ENCODE measurements at regions of chr1 and their contacts with region 1.

Region 1: GRCh38 chr1:89125913-89126580 is at the start of gene GBP2:
- DNase-seq: peak; percentile 51
- H3K4me3 Mint-ChIP-seq: peak within 1 kb of the TSS; percentile 95
- H3K27ac Mint-ChIP-seq: peak within 1 kb of the TSS; percentile 99
- H3K4me1 Mint-ChIP-seq: peaks cover 54% of the 10 kb centered on the region
- H3K27me3 Mint-ChIP-seq: no peaks in the 10 kb centered on the region
- total RNA-seq, gene GBP2: 396 to 403 TPM

Region 2: GRCh38 chr1:88990426-88990825 is 135.6 kb before region 1 on chr1:
- CTCF ChIA-PET with region 1: no interaction called
- POLR2A ChIA-PET with region 1: interaction called, 4 read pairs
- intact Hi-C with region 1: loop called (anchors 1 kb)
- DNase-seq: no peak
- H3K4me3 Mint-ChIP-seq: peak overlapping the region; percentile 35
- H3K27ac Mint-ChIP-seq: peak overlapping the region; percentile 70
- H3K4me1 Mint-ChIP-seq: peaks cover 47% of the 10 kb centered on the region
- H3K27me3 Mint-ChIP-seq: no peaks in the 10 kb centered on the region

Region 3: GRCh38 chr1:89065079-89065868 is 60.8 kb before region 1 on chr1 and contains the start of gene GBP1:
- CTCF ChIA-PET with region 1: interaction called, 3 read pairs
- POLR2A ChIA-PET with region 1: interaction called, 7 read pairs
- intact Hi-C with region 1: loop called (anchors 1 kb)
- DNase-seq: no peak
- H3K4me3 Mint-ChIP-seq: peak within 1 kb of the TSS; percentile 87
- H3K27ac Mint-ChIP-seq: peak within 1 kb of the TSS; percentile 91
- H3K4me1 Mint-ChIP-seq: peaks cover 56% of the 10 kb centered on the region
- H3K27me3 Mint-ChIP-seq: no peaks in the 10 kb centered on the region
- total RNA-seq, gene GBP1: 66.9 to 67.9 TPM

Region 4: DNA sequence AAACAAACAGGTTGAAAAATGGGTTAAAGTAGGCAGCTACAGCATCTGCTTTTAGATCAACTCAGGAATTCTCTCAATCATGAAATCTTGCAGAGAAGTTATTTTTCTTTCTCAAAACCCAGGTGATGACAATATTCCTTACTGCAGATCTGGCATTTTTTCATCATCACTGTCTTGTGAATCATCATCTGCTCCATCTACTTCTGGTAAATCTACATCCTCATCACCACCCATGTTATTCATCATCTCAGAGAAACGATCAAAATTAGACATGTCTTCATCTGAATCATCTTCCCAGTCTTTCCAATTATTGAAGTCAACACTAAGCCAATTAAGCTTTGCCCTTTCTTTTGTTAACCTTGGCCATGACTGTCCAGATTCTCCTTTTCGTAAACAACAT is 21.9 kb before region 1 on chr1:
- CTCF ChIA-PET with region 1: no interaction called
- POLR2A ChIA-PET with region 1: interaction called, 4 read pairs
- intact Hi-C with region 1: loop called (anchors 1 kb)
- DNase-seq: no peak
- H3K4me3 Mint-ChIP-seq: no peak overlapping the region
- H3K27ac Mint-ChIP-seq: peak overlapping the region; percentile 69
- H3K4me1 Mint-ChIP-seq: peaks cover 52% of the 10 kb centered on the region
- H3K27me3 Mint-ChIP-seq: no peaks in the 10 kb centered on the region

Region 5: DNA sequence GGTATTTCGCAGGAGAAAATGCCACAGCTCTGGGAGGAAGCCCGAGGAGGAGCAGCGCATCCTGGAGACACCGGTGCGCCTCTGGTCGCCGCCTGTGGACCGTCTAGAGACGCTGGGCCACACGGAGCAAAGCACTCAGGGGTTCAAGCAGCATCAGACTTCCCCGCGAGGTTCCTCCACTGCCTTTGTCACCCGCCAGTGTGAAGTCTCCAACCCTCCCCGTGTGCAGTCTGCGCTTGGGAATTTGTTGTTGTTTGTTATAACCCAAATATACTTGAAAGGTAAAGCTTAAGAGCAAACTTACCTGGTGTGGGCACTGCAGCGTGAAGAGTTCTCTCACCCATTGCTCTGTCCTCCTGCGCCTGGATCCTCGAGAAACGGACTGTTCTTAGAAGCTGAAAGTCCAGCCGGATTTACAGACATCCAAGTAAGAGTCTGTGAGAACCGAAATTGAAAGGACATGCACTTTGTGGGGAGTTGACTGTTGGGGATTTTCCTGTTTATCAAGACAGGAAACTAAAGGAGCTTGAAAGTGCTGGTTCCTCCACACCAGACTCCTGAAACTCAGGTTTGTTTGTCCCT is 72.5 kb after region 1 on chr1 and contains the start of gene GBP4:
- CTCF ChIA-PET with region 1: interaction called, 5 read pairs
- POLR2A ChIA-PET with region 1: interaction called, 38 read pairs
- intact Hi-C with region 1: loop called (anchors 1 kb)
- DNase-seq: peak; percentile 60
- H3K4me3 Mint-ChIP-seq: peak within 1 kb of the TSS; percentile 88
- H3K27ac Mint-ChIP-seq: peak within 1 kb of the TSS; percentile 90
- H3K4me1 Mint-ChIP-seq: peaks cover 80% of the 10 kb centered on the region
- H3K27me3 Mint-ChIP-seq: no peaks in the 10 kb centered on the region
- total RNA-seq, gene GBP4: 26.5 to 29.9 TPM

Region 6: GRCh38 chr1:89524369-89525168 is 398.5 kb after region 1 on chr1 and contains the start of gene LRRC8B:
- CTCF ChIA-PET with region 1: no interaction called
- POLR2A ChIA-PET with region 1: no interaction called
- intact Hi-C with region 1: loop called (anchors 1 kb)
- DNase-seq: peak; percentile 93
- H3K4me3 Mint-ChIP-seq: no peak within 1 kb of the TSS
- H3K27ac Mint-ChIP-seq: no peak within 1 kb of the TSS
- H3K4me1 Mint-ChIP-seq: peaks cover 31% of the 10 kb centered on the region
- H3K27me3 Mint-ChIP-seq: no peaks in the 10 kb centered on the region
- total RNA-seq, gene LRRC8B: 41.1 to 42.1 TPM

Measured in activated CD4-positive, alpha-beta memory T cell treated with anti-CD3 and anti-CD28 coated beads for 36 hours (primary cell).